ENCODE measurements at regions of chr5 and their contacts with region 1.

Region 1: GRCh38 chr5:137660349-137660817 is 75.5 kb downstream of the KLHL3 start:
- DNase-seq: peak; percentile 87
- ATAC-seq: peak; percentile 94
- H3K4me3 Mint-ChIP-seq: no peak overlapping the region
- H3K27ac Mint-ChIP-seq: no peak overlapping the region
- H3K4me1 Mint-ChIP-seq: peaks cover 21% of the 10 kb centered on the region
- H3K27me3 Mint-ChIP-seq: no peaks in the 10 kb centered on the region

Region 2: DNA sequence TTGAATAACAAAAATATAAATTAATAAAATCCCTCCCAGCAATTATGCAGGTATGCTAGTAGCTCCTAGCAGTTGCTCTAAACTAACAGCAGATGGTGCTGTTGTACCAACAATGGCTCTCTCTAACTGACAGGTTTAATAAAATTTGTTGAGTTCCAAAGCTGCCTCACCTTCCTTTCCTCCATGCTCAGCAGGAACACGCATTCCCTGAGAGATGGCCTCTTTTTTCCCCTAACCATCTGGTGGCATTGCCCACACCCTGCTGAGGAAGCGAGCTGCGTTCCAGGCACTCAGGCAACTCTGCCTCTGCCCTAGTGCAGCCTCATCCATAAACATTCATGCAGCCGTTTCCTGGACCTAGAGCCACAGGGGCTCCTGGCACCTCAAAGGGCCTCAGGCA is 30.7 kb before region 1 on chr5:
- CTCF ChIA-PET with region 1: interaction called, 26 read pairs
- POLR2A ChIA-PET with region 1: interaction called, 3 read pairs
- DNase-seq: peak; percentile 40
- ATAC-seq: peak; percentile 73
- H3K4me3 Mint-ChIP-seq: no peak overlapping the region
- H3K27ac Mint-ChIP-seq: peak overlapping the region; percentile 19
- H3K4me1 Mint-ChIP-seq: no peaks in the 10 kb centered on the region
- H3K27me3 Mint-ChIP-seq: no peaks in the 10 kb centered on the region

Region 3: DNA sequence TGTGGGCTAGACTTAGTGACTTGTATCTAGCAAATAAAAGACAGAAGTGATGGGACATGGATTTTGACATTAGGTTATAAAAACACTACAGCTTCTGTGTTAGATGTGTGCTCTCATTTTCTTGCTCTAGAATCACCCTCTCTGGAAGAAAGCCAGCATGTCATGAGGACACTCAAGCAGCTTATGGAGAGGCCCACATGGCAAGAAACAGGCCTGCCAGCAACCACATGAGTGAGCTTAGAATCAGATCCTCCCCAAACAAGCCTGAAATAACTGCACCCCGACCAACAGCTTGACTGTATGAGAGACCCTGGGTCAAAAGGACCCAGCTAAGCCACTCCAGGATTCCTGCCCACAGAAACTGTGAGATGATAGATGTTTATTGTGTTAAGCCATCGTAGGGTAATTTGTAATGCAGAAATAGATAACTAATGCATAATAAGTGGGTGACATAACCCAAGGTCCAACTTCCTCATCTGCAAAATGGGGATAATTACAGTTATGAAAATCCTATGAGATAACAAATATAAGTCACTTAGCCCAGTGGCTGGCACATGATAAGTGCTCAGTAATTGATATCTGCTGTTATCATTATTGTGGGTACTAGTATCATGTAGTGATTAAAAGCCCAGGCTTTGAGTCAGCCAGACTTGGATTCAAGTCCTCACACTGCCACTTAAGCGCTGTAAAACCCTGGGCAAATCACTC is 11.0 kb before region 1 on chr5:
- CTCF ChIA-PET with region 1: interaction called, 21 read pairs
- POLR2A ChIA-PET with region 1: no interaction called
- DNase-seq: no peak
- ATAC-seq: no peak
- H3K4me3 Mint-ChIP-seq: no peak overlapping the region
- H3K27ac Mint-ChIP-seq: no peak overlapping the region
- H3K4me1 Mint-ChIP-seq: no peaks in the 10 kb centered on the region
- H3K27me3 Mint-ChIP-seq: no peaks in the 10 kb centered on the region

Region 4: DNA sequence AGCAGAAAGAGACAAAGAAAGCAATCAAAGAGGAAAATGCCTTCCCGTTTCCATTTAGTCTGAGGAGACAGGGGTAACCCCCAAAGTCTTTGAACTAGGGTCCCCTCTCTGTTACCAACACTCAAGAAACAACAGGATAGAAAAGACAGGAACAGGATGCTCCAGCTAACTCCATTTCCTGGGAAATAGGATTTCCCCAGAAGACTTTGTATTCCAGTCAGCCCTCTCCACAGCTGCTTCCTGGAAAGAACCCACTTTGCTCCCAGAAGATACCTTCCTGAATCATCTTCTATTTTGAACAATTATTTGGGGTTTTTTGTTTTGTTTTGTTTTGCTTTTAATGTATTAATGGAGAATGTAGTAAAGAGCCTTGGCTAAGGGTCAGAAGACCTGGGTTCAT is 19.5 kb after region 1 on chr5:
- CTCF ChIA-PET with region 1: interaction called, 10 read pairs
- POLR2A ChIA-PET with region 1: no interaction called
- DNase-seq: no peak
- ATAC-seq: no peak
- H3K4me3 Mint-ChIP-seq: no peak overlapping the region
- H3K27ac Mint-ChIP-seq: no peak overlapping the region
- H3K4me1 Mint-ChIP-seq: no peaks in the 10 kb centered on the region
- H3K27me3 Mint-ChIP-seq: no peaks in the 10 kb centered on the region

Region 5: DNA sequence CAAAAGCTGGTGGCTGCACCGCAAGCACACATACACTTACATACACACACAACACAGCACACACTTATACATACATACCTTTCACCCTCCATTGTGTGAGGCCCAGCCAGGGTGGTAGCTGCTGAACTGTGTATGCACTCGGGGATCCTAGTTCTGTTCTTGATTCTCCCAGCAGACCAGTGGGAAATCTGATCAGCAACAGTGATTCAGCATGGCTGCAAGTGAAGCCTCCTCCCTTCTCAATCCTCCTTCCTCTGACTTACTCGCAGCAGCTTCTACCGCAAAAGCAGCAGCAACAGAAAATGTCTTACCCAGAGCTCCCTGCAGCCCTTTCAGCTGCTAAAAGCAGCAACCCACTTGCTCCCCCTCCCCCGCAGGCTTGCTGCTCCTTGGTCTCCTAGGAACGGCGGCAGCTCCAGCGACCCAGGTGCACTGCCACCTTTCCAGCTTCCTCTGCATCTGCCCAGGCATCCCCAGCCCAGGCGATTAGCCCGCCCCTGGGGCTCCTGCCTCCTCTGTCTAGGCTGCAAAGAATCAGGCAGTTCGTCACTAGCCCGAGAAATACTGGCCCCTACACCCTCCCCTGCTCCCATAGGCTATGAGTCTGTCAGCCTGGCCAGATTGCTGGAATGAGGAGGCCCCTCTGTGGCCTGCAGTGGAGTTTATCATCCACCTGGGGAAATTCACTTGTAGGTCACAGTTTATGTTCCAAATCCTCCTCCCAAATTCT is 75.3 kb after region 1 on chr5 and contains the start of gene KLHL3:
- CTCF ChIA-PET with region 1: interaction called, 569 read pairs
- POLR2A ChIA-PET with region 1: interaction called, 7 read pairs
- DNase-seq: peak; percentile 54
- ATAC-seq: peak; percentile 48
- H3K4me3 Mint-ChIP-seq: no peak within 1 kb of the TSS
- H3K27ac Mint-ChIP-seq: no peak within 1 kb of the TSS
- H3K4me1 Mint-ChIP-seq: peaks cover 26% of the 10 kb centered on the region
- H3K27me3 Mint-ChIP-seq: no peaks in the 10 kb centered on the region
- total RNA-seq, gene KLHL3: 13.7 to 15.2 TPM

Region 6: GRCh38 chr5:137754126-137754960 is 94.0 kb after region 1 on chr5 and contains the start of gene HNRNPA0:
- CTCF ChIA-PET with region 1: interaction called, 569 read pairs
- POLR2A ChIA-PET with region 1: interaction called, 10 read pairs
- DNase-seq: peak; percentile 97
- ATAC-seq: peak; percentile 88
- H3K4me3 Mint-ChIP-seq: peak within 1 kb of the TSS; percentile 99
- H3K27ac Mint-ChIP-seq: peak within 1 kb of the TSS; percentile 100
- H3K4me1 Mint-ChIP-seq: peaks cover 26% of the 10 kb centered on the region
- H3K27me3 Mint-ChIP-seq: peaks cover 3% of the 10 kb centered on the region
- total RNA-seq, gene HNRNPA0: 31.3 to 34.0 TPM